GM12878 (cell line): ENCODE measurements at regions of chr3 and their contacts with region 1.

Region 1: GRCh38 chr3:133384331-133385027 is 15.4 kb upstream of the BFSP2 start:
- DNase-seq: no peak
- ATAC-seq: peak; percentile 97
- H3K4me3 ChIP-seq: no peak overlapping the region
- H3K27ac ChIP-seq: no peak overlapping the region
- H3K4me1 ChIP-seq: no peaks in the 10 kb centered on the region
- H3K27me3 ChIP-seq: no peaks in the 10 kb centered on the region; a peak in 2 of 4 replicates
- CTCF ChIP-seq: peak; percentile 83 to 93 (median 91)
- EP300 ChIP-seq: no peak
- POLR2A ChIP-seq: no peak
- RAD21 ChIP-seq: peak; percentile 75

Region 2: GRCh38 chr3:132730891-132731580 is 653.4 kb before region 1 on chr3:
- CTCF ChIA-PET with region 1: interaction called, 43 read pairs
- POLR2A ChIA-PET with region 1: no interaction called
- RAD21 ChIA-PET with region 1: interaction called, 5 read pairs
- SMC1A ChIA-PET with region 1: interaction called, 20 read pairs
- in situ Hi-C with region 1: loop called (anchors 5 kb)
- intact Hi-C with region 1: loop called (anchors 1 kb)
- DNase-seq: no peak
- ATAC-seq: peak; percentile 70
- H3K4me3 ChIP-seq: no peak overlapping the region
- H3K27ac ChIP-seq: no peak overlapping the region
- H3K4me1 ChIP-seq: no peaks in the 10 kb centered on the region
- H3K27me3 ChIP-seq: no peaks in the 10 kb centered on the region; a peak in 2 of 4 replicates
- CTCF ChIP-seq: peak in 2 of 3 experiments; percentile 40 to 57; a peak in 3 of 6 replicates
- EP300 ChIP-seq: no peak
- POLR2A ChIP-seq: no peak
- RAD21 ChIP-seq: peak; percentile 77

Region 3: GRCh38 chr3:132803889-132804288 is 580.6 kb before region 1 on chr3:
- CTCF ChIA-PET with region 1: no interaction called
- POLR2A ChIA-PET with region 1: no interaction called
- RAD21 ChIA-PET with region 1: no interaction called
- SMC1A ChIA-PET with region 1: no interaction called
- in situ Hi-C with region 1: no loop called
- intact Hi-C with region 1: loop called (anchors 5 kb)
- DNase-seq: no peak
- ATAC-seq: no peak
- H3K4me3 ChIP-seq: no peak overlapping the region
- H3K27ac ChIP-seq: no peak overlapping the region
- H3K4me1 ChIP-seq: no peaks in the 10 kb centered on the region
- H3K27me3 ChIP-seq: no peaks in the 10 kb centered on the region
- CTCF ChIP-seq: no peak
- EP300 ChIP-seq: no peak
- POLR2A ChIP-seq: no peak
- RAD21 ChIP-seq: no peak

Region 4: GRCh38 chr3:133426721-133427120 is 42.2 kb after region 1 on chr3:
- CTCF ChIA-PET with region 1: interaction called, 5 read pairs
- POLR2A ChIA-PET with region 1: no interaction called
- RAD21 ChIA-PET with region 1: no interaction called
- SMC1A ChIA-PET with region 1: interaction called, 4 read pairs
- in situ Hi-C with region 1: no loop called
- intact Hi-C with region 1: loop called (anchors 2 kb)
- DNase-seq: no peak
- ATAC-seq: no peak
- H3K4me3 ChIP-seq: no peak overlapping the region
- H3K27ac ChIP-seq: no peak overlapping the region
- H3K4me1 ChIP-seq: peaks cover 5% of the 10 kb centered on the region; the same call in 1 of the 2 replicates
- H3K27me3 ChIP-seq: peaks cover 0 to 4% of the 10 kb centered on the region in 2 experiments; a peak in 1 of 4 replicates
- CTCF ChIP-seq: no peak
- EP300 ChIP-seq: no peak
- POLR2A ChIP-seq: no peak
- RAD21 ChIP-seq: no peak